ENCODE measurements at regions of chr9 and their contacts with region 1.

Region 1: DNA sequence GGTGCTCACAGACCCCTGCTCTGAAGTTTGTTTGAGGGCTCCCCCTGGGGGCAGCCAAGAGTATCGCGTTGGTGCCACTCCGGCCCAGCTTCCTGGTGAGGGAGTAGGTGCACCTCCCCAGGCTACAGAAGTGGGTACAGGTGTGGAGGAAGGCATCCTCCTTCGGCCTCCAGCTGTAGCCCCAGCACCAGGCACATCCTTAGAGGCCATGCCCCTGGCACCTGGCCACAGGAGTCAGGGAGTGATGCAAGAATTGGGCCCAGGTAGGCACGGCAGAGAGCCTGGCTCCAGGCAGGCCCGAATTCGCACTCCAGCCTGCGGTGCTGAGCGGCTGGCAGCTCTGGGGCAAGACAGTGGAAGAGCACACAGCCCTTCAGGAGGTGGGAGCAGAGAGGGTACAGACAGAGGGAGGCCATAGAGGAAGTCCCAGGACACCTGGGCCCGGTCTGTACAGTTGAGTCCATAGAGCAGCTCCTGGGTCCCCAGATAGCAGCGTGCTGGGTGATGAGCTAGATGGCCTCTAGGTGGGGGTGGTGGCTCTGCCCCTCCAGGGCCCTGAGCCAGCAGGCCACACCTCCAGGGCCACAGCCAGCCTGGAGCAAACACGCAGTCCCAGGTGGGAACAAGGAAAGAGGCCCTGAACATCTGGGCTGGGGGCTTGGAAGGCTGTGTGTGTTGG is 2.4 kb downstream of the SAPCD2 start:
- DNase-seq: peak; percentile 90
- H3K4me3 ChIP-seq: no peak overlapping the region
- H3K27ac ChIP-seq: peak overlapping the region in 3 of 4 donors; percentile 4 to 56 (median 24)
- H3K4me1 ChIP-seq: peaks cover 7 to 26% (median 22%) of the 10 kb centered on the region in 4 donors
- H3K27me3 ChIP-seq: peaks cover 14% of the 10 kb centered on the region
- CTCF ChIP-seq: peak; percentile 73 to 96 (median 85)
- EP300 ChIP-seq: no peak
- POLR2A ChIP-seq: no peak

Region 2: DNA sequence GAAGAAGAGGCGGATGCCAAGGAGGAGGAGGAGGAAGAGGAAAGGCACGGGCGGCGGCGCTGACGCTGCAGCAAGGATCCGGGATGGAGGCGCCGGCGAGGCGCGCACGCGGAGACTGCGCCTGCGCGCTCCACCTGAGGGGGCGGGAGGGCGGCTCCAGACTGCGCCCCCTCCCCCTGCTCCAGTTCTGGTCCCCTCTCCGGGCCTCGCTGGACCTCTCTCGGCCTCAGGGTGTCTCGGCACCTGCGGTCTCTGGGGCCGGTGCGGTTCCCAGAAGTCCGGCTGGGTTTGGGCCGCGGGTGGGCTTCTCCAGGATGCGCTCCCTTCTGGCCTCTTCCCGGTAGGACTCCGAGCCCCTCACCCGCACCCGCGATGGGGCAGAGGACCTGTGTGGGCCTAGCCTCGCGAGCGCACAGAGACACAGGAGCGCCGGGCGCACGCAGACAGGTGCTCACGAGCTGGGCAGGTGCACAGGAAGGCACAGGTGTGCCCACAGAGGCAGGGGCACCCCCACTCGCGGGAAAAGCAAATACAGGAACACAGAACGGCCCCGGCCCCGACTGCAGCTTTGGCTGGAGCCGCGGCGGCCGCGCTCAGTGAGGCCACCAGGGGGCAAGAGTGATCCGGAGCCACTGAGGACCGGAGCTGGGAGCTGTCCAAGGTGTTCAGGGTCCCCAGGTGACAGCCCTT is 21.8 kb before region 1 on chr9 and contains the start of gene NPDC1:
- in situ Hi-C with region 1: no loop called
- intact Hi-C with region 1: loop called (anchors 2 kb)
- DNase-seq: peak; percentile 86
- H3K4me3 ChIP-seq: peak within 1 kb of the TSS; percentile 16 to 60 (median 50)
- H3K27ac ChIP-seq: peak within 1 kb of the TSS; percentile 56 to 75 (median 64)
- H3K4me1 ChIP-seq: peaks cover 22 to 38% (median 33%) of the 10 kb centered on the region in 4 donors
- H3K27me3 ChIP-seq: peaks cover 64% of the 10 kb centered on the region
- CTCF ChIP-seq: peak; percentile 85 to 94 (median 92)
- EP300 ChIP-seq: no peak
- POLR2A ChIP-seq: no peak
- total RNA-seq, gene NPDC1: 58.0 to 972 (median 274) TPM